Activated naive CD4-positive, alpha-beta T cell treated with anti-CD3 and anti-CD28 coated beads, Interleukin-2, amount 10 ng/mL, durations not matched to agents 7 days and 5 days (primary cell): ENCODE measurements at regions of chr10 and their contacts with region 1.

Region 1: DNA sequence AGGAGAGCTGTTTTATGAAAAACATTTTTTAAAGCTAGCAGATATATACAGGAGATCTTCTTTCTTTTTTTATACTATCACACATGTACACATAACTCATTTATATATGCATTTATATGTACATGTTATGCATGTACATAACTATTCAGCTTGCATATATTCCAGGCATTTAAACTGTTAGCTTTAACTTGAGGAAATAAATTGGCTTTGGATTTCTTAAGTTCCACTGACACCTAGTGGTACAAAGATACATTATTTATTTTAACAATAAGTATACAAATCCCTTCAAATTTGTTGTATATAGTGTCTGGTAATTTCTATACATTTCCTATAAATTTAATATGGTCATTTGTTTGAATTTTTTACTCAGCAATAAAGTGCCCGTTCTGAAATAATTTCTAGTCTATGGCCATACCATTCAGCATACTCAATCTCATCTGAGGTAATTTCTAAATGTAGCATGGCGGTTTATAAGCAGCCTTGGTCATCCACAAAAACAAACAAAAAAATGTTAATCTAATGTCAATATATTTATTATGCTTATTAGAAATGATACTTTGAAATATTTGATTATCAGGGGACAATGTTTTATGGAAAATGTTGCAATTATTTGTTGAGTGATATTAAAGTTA is 11.6 kb downstream of the ZDHHC6 start:
- DNase-seq: no peak
- H3K4me3 Mint-ChIP-seq: no peak overlapping the region
- H3K27ac Mint-ChIP-seq: no peak overlapping the region
- H3K4me1 Mint-ChIP-seq: no peaks in the 10 kb centered on the region
- H3K27me3 Mint-ChIP-seq: no peaks in the 10 kb centered on the region

Region 2: GRCh38 chr10:112307358-112308124 is 127.6 kb before region 1 on chr10:
- CTCF ChIA-PET with region 1: interaction called, 19 read pairs
- DNase-seq: peak; percentile 55
- H3K4me3 Mint-ChIP-seq: no peak overlapping the region
- H3K27ac Mint-ChIP-seq: no peak overlapping the region
- H3K4me1 Mint-ChIP-seq: no peaks in the 10 kb centered on the region
- H3K27me3 Mint-ChIP-seq: peaks cover 26% of the 10 kb centered on the region

Region 3: GRCh38 chr10:112314822-112315474 is 120.2 kb before region 1 on chr10:
- CTCF ChIA-PET with region 1: interaction called, 10 read pairs
- DNase-seq: peak; percentile 84
- H3K4me3 Mint-ChIP-seq: no peak overlapping the region
- H3K27ac Mint-ChIP-seq: no peak overlapping the region
- H3K4me1 Mint-ChIP-seq: no peaks in the 10 kb centered on the region
- H3K27me3 Mint-ChIP-seq: peaks cover 25% of the 10 kb centered on the region

Region 4: DNA sequence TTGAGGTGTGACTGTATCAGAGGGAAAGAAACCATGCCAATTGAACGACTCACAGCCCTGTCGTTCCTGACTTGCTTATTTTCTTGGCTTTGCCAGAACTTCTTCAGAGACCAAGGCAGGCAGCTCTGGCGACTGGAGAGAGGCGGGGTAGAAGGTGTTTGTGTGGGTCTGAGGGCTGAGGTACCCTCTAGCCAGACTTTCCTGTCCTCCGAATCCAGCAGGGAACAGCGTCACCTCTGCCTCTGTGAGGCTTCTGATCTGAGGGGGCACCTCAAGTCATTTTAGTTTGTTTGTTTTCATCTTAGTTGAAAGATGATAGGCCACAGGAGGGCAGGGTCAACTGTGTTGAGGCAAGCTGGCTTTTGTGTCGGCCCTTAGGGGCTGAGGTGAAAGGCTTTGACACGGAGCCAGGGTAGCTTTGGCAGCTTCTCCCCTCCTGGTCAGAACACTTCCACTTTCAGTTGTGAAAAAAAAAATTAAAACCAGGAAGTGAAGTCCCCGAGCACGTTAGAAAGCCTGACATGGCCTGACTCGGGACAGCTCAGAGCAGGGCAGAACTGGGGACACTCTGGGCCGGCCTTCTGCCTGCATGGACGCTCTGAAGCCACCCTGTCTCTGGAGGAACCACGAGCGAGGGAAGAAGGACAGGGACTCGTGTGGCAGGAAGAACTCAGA is 59.2 kb before region 1 on chr10:
- CTCF ChIA-PET with region 1: interaction called, 16 read pairs
- DNase-seq: peak; percentile 67
- H3K4me3 Mint-ChIP-seq: peak overlapping the region; percentile 100
- H3K27ac Mint-ChIP-seq: peak overlapping the region; percentile 99
- H3K4me1 Mint-ChIP-seq: peaks cover 52% of the 10 kb centered on the region
- H3K27me3 Mint-ChIP-seq: no peaks in the 10 kb centered on the region

Region 5: DNA sequence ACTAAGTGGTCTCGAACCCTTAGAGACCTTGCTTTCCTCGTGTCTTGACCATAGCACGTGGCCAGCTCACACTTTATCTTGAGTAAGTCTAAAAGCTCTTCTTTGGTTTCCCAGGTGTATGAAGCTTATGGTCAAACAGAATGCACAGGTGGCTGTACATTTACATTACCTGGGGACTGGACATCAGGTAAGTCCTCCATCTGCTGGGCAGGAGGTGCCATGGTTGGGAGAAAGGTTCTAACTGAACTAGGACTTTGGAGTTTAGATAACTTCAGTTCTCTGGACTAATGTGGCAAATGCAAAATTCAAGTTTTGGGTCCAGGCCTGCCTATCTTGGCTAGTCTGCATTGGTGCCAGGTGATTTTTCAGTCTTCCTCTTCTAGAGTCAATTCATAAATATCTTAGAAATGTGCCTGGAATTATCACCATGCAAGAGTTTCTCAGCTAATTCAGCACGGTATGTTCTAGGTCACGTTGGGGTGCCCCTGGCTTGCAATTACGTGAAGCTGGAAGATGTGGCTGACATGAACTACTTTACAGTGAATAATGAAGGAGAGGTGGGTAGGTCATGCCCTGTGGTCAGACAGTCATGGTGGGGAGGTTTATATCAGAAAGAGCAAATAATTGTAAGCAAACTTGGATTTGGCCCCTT is 13.5 kb before region 1 on chr10:
- CTCF ChIA-PET with region 1: interaction called, 19 read pairs
- DNase-seq: no peak
- H3K4me3 Mint-ChIP-seq: no peak overlapping the region
- H3K27ac Mint-ChIP-seq: no peak overlapping the region
- H3K4me1 Mint-ChIP-seq: no peaks in the 10 kb centered on the region
- H3K27me3 Mint-ChIP-seq: no peaks in the 10 kb centered on the region

Region 6: DNA sequence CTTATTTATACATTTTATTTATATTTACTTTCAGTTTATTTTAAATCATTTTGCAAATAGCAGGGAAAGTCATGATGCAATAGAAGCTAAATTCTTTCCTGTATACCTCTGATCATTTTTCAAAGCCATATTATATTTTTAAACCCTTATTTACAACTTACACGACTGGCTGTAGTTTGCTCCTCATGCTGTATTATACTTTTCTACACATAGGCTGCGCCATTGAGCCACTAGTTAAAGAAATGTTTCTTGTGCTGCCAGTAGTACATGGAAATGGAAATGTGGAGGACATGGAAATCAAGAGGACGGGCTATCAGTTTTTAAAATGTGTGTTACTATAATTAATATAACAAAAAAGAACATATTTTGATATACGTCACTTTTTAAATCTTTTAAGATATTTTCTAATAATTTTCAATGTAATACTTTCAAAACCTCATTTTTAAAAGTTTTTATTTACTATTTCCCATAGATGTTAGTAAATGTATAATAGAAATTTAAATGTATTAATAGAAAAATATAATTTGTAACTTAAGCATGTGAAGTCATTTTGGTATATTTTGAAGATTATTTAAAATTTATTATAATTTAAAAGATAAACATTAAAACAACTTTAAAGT is 130.4 kb after region 1 on chr10:
- CTCF ChIA-PET with region 1: no interaction called
- DNase-seq: peak; percentile 24
- H3K4me3 Mint-ChIP-seq: no peak overlapping the region
- H3K27ac Mint-ChIP-seq: no peak overlapping the region
- H3K4me1 Mint-ChIP-seq: no peaks in the 10 kb centered on the region
- H3K27me3 Mint-ChIP-seq: no peaks in the 10 kb centered on the region

Region 7: DNA sequence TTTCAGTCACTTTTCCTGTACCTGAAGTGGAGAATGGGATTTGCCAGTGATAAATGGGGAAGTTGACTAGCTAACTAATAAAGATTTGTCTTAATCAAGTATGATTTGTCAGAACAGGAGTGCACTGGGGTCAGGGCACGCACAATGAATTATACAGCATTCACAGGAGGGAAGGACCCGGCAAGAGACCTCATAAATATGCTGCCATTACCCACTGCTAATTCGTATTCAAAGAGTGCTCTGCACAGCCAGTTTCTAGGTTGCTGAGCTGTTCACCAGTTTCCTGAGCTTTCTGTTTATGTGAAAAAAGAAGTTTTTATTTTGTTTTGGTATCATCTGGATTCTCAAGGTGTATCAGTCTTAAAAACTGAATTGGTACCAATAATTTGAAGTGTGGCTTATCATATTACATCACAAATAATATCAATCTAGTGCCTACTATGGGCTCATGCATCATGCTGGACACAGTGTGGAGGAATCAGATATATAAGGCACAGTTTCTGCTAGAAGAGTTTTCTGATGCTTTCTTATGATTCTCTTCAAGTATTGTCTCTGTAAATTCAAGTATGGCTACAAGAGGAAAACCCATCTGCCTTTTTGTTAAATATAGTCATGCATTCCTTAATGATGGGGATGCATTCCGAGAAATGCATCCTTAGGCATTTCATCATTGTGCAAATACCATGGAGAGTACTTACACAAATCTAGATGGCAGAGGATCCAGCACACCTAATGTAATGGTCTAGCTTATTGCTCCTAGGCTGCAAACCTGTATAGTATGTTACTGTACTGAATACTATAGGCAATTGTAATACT is 214.1 kb after region 1 on chr10:
- CTCF ChIA-PET with region 1: no interaction called
- DNase-seq: no peak
- H3K4me3 Mint-ChIP-seq: no peak overlapping the region
- H3K27ac Mint-ChIP-seq: no peak overlapping the region
- H3K4me1 Mint-ChIP-seq: no peaks in the 10 kb centered on the region
- H3K27me3 Mint-ChIP-seq: no peaks in the 10 kb centered on the region